ENCODE measurements at regions of chr12 and their contacts with region 1.

Region 1: DNA sequence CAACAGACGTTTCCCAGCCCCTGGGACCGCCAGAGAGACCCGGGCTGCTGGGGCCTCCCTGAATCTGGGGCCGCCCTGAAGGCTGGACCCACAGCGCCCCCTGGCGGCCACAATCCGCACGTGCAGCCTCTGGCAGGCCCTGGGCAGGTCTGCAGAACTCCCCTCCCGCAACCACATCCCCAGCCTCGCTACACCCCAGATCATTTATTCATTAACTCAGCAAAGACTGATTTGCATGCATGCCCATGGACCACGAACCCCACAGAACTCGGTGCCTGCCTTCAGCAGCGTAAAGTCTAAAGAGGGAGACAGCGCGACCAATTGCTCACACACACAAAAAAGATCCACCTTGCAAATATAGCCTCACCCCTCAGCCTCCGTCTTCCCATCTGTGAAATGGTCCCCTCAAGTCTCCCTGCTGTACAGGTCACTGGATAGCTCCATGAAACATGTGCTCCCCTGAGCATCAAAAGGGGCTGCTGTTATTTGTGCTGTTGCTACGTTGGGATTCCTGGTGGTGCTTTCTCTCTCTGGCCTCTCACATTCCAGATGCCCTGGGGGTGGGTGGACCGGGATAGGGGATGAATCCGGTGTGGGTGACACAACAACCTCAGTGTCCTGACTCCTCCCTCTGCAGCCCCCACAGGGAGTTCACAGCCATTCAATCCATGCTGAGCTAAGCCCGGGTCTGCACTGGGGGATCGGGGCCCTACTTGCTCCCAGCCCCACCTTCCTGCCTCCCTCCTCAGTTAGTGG is 96.4 kb downstream of the SCARB1 start:
- DNase-seq: peak; percentile 80
- ATAC-seq: peak; percentile 90
- H3K4me3 ChIP-seq: no peak overlapping the region
- H3K4me3 Mint-ChIP-seq: no peak overlapping the region
- H3K27ac ChIP-seq: no peak overlapping the region
- H3K27ac Mint-ChIP-seq: peak overlapping the region; percentile 1
- H3K4me1 ChIP-seq: peaks cover 11 to 14% of the 10 kb centered on the region in 2 donors
- H3K4me1 Mint-ChIP-seq: peaks cover 10% of the 10 kb centered on the region
- H3K27me3 ChIP-seq: peaks cover 0 to 9% (median 4%) of the 10 kb centered on the region in 4 experiments
- H3K27me3 Mint-ChIP-seq: peaks cover 12% of the 10 kb centered on the region
- CTCF ChIP-seq: peak; percentile 98

Region 2: DNA sequence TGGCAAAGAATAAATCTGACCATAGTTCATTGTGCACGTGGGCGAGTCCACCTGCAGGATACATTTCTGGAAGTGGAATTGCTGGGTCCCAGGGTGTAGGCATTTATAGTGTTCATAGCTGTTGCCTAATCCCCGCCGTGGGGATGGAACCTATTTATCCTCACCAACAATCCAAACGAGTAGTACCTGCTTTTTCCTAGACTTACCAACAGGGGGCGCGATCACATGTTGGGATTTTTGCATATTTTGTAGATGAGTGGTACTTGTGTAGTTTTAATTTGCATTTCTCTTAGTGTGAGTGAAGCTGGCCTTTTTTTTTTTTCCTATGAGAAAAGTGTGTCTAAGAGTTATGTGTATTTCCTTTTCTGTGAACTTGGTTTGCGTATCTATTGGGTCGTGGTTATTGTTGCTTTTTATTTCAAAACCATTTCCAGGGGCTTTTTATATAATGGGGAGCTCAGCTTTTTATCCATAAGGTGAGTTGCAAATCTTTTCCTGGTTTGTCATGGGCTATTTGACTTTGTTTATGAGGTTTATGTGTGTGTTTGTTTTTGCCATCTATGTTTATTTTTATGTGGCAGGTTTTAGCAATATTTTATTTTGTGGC is 861.8 kb before region 1 on chr12:
- CTCF ChIA-PET with region 1: no interaction called
- POLR2A ChIA-PET with region 1: no interaction called
- intact Hi-C with region 1: loop called (anchors 5 kb)
- DNase-seq: peak; percentile 77
- ATAC-seq: peak; percentile 62
- H3K4me3 ChIP-seq: no peak overlapping the region
- H3K4me3 Mint-ChIP-seq: no peak overlapping the region
- H3K27ac ChIP-seq: no peak overlapping the region
- H3K27ac Mint-ChIP-seq: no peak overlapping the region
- H3K4me1 ChIP-seq: no peaks in the 10 kb centered on the region
- H3K4me1 Mint-ChIP-seq: peaks cover 4% of the 10 kb centered on the region
- H3K27me3 ChIP-seq: peaks cover 0 to 6% (median 0%) of the 10 kb centered on the region in 4 experiments
- H3K27me3 Mint-ChIP-seq: peaks cover 16% of the 10 kb centered on the region
- CTCF ChIP-seq: peak; percentile 83

Region 3: GRCh38 chr12:124036674-124037109 is 730.6 kb before region 1 on chr12:
- CTCF ChIA-PET with region 1: interaction called, 160 read pairs
- POLR2A ChIA-PET with region 1: interaction called, 5 read pairs
- intact Hi-C with region 1: loop called (anchors 1 kb)
- DNase-seq: peak; percentile 68
- ATAC-seq: no peak
- H3K4me3 ChIP-seq: no peak overlapping the region
- H3K4me3 Mint-ChIP-seq: no peak overlapping the region
- H3K27ac ChIP-seq: no peak overlapping the region
- H3K27ac Mint-ChIP-seq: no peak overlapping the region
- H3K4me1 ChIP-seq: no peaks in the 10 kb centered on the region
- H3K4me1 Mint-ChIP-seq: no peaks in the 10 kb centered on the region
- H3K27me3 ChIP-seq: no peaks in the 10 kb centered on the region
- H3K27me3 Mint-ChIP-seq: peaks cover 16% of the 10 kb centered on the region
- CTCF ChIP-seq: peak; percentile 98

Region 4: GRCh38 chr12:124347716-124348357 is 419.4 kb before region 1 on chr12:
- CTCF ChIA-PET with region 1: interaction called, 20 read pairs
- POLR2A ChIA-PET with region 1: no interaction called
- intact Hi-C with region 1: no loop called
- DNase-seq: peak; percentile 44
- ATAC-seq: no peak
- H3K4me3 ChIP-seq: no peak overlapping the region
- H3K4me3 Mint-ChIP-seq: no peak overlapping the region
- H3K27ac ChIP-seq: no peak overlapping the region
- H3K27ac Mint-ChIP-seq: no peak overlapping the region
- H3K4me1 ChIP-seq: no peaks in the 10 kb centered on the region
- H3K4me1 Mint-ChIP-seq: no peaks in the 10 kb centered on the region
- H3K27me3 ChIP-seq: no peaks in the 10 kb centered on the region
- H3K27me3 Mint-ChIP-seq: no peaks in the 10 kb centered on the region
- CTCF ChIP-seq: peak; percentile 64

Region 5: DNA sequence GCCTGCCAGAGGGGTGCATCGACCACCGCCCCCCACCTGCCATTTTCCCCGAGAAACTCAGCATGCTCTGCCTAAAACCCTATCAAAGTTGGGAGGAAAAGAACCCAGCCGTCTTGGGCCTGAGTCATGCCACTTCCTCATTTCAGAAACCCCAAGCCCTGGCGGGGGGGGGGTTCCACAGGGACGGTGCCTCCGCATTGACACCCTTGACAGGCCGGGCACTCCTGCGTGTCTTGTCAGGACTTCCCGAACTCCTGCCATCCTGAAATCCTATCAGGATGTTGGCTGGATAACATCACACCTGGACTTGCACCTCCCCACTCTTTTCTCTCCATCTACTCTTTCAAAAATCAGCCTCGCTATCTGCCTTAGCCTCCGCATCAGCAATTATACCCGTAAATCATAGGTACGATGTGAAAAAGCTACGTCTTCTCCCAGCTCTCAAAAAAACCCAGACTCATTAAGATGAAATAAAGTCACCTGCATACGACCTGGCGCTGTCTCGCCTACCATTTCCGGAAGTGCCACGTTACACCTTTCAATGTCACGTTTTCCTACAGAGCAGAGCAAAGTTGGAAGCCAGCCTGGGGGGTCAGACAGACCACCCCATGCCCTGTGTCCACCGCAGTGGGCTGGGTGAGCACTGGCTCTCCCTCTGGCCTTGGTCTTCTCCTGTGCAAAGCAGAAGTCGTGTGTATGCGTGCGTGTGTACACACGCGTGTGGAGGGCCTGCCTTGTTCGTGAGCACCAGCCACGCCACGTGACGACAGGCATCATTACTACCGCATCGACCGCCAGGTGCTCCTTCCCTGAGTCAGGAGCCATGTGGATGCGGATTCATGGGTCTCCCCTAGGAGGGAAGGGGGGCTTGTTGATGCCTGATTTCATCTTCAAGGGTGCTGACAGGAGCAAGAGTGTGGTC is 375.6 kb before region 1 on chr12:
- CTCF ChIA-PET with region 1: interaction called, 3 read pairs
- POLR2A ChIA-PET with region 1: no interaction called
- intact Hi-C with region 1: loop called (anchors 5 kb)
- DNase-seq: peak; percentile 88
- ATAC-seq: peak; percentile 74
- H3K4me3 ChIP-seq: peak overlapping the region; percentile 26 to 63 (median 31)
- H3K4me3 Mint-ChIP-seq: peak overlapping the region; percentile 94
- H3K27ac ChIP-seq: peak overlapping the region; percentile 63 to 86
- H3K27ac Mint-ChIP-seq: peak overlapping the region; percentile 74
- H3K4me1 ChIP-seq: peaks cover 39 to 49% of the 10 kb centered on the region in 2 donors
- H3K4me1 Mint-ChIP-seq: peaks cover 39% of the 10 kb centered on the region
- H3K27me3 ChIP-seq: no peaks in the 10 kb centered on the region
- H3K27me3 Mint-ChIP-seq: no peaks in the 10 kb centered on the region
- CTCF ChIP-seq: no peak

Region 6: DNA sequence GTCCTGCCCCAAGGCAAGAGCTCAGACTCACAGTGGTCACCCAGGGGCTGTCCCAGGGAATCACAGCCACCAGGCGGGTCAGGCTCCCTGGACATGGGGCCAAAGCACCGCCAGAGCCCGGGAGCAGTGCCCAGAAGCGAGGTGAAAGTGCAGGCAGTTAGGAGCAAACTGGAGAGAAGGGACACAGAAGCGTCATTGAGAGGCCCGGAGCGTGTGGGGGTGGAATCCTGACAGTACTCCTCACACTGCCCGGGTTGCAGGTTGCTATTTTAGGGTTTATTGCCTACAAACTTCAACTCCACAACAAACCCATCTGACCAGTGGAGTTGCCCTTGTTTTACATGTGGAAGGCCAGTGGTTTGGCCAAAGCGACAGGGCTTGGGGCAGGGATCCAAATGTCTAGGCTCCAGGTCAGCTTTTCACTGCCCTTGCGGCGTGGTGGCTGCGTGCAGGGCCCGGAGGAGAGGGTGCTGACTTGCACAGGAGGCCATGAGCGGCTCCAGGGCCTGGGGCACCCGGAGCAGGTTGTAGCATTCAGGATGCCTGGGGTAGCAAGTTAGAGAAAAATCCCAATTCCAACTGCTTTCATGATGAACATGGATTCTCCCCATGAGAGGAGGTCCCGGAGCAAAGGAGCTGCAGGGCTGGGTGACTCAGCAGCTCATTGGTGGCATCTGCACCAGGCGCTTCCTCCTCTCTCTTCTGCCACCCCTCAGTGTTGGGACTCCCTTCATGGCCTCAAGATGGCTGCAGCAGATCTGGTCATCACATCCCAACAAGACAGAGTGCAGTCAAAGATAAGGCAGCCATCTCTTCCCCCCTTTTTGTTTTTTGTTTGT is 87.5 kb before region 1 on chr12:
- CTCF ChIA-PET with region 1: no interaction called
- POLR2A ChIA-PET with region 1: no interaction called
- intact Hi-C with region 1: no loop called
- DNase-seq: no peak
- ATAC-seq: no peak
- H3K4me3 ChIP-seq: no peak overlapping the region
- H3K4me3 Mint-ChIP-seq: no peak overlapping the region
- H3K27ac ChIP-seq: no peak overlapping the region
- H3K27ac Mint-ChIP-seq: no peak overlapping the region
- H3K4me1 ChIP-seq: peaks cover 0 to 15% of the 10 kb centered on the region in 2 donors
- H3K4me1 Mint-ChIP-seq: peaks cover 12% of the 10 kb centered on the region
- H3K27me3 ChIP-seq: no peaks in the 10 kb centered on the region
- H3K27me3 Mint-ChIP-seq: peaks cover 5% of the 10 kb centered on the region
- CTCF ChIP-seq: no peak